WTC11 (cell line): ENCODE measurements at regions of chr9 and their contacts with region 1.

Region 1: DNA sequence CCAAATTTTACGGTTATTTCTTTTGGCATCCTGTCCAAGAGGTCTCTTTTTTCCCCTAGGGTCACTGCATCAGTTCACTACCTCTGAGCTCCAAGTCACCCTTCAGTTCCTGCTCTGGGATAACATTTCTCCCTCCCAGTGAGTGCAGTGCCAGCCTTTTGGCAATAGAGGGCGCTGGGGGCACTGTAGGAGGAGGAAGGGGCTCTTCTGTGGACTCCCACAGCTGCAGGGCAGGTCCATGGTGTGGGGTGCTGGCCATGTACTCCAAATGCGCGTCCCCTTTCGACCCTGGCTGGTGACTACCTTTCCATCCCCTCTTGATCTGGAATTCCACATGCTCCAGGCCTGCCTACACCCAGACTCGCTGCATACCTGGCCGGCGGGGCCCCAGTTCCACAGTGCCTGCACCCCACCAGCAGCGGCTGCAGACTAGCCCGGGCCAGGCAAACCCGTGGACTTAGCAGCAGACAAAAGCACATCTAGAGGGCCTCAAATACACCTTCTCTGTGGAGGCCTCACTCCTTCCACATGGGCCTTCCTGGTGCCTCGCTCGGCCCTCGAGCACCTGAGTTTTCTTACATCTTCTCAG is 20.4 kb upstream of the NINJ1 start:
- DNase-seq: peak; percentile 91
- ATAC-seq: peak; percentile 93
- H3K4me3 Mint-ChIP-seq: no peak overlapping the region
- H3K27ac Mint-ChIP-seq: no peak overlapping the region
- H3K4me1 Mint-ChIP-seq: no peaks in the 10 kb centered on the region
- H3K27me3 Mint-ChIP-seq: peaks cover 2% of the 10 kb centered on the region; the same call in 1 of the 2 replicates
- CTCF ChIP-seq: peak; percentile 92

Region 2: GRCh38 chr9:93108291-93109041 is 45.9 kb before region 1 on chr9:
- CTCF ChIA-PET with region 1: interaction called, 15 read pairs
- POLR2A ChIA-PET with region 1: no interaction called
- DNase-seq: no peak
- ATAC-seq: 0 out of 2 replicates have a peak, but pooled peaks have one; percentile 10
- H3K4me3 Mint-ChIP-seq: no peak overlapping the region
- H3K27ac Mint-ChIP-seq: no peak overlapping the region
- H3K4me1 Mint-ChIP-seq: peaks cover 7% of the 10 kb centered on the region; the same call in 1 of the 2 replicates
- H3K27me3 Mint-ChIP-seq: no peaks in the 10 kb centered on the region
- CTCF ChIP-seq: no peak

Region 3: DNA sequence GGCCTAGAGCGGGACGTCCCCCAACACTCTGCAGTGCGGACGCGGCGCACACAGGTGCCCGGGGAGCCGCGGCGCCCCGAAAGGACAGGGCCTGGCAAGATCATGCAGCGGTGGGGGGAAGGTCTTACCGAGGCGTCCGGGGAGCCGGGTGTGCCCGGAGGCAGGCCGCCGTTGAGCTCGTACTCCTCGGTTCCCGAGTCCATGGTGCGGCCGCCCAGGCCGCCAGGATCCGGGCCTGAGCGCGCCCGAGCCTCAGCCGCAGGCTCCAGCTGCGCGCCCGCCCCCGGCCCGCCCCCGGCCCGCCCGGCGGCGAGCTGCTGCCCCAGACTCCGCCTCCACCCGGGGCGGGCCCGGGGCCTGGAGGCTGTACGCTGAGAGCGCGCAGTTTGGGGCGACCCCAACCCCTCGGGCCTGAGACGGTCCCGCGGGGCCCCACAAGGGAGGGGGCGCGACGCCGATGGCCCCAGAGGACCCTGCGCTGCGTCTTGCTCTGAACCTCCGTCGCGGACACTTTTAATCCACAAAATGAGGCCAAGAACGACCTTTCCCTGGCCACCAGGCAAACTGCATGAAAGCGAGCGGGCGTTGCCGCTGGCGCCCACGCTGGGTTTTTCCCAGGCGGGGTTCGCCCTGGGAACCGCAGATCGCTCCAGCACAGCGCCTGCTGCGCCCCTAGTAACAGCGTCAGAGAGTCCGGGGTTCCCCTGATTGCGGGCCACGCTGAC is 20.2 kb before region 1 on chr9 and contains the start of gene NINJ1:
- CTCF ChIA-PET with region 1: interaction called, 67 read pairs
- POLR2A ChIA-PET with region 1: interaction called, 4 read pairs
- DNase-seq: peak; percentile 62
- ATAC-seq: peak; percentile 87
- H3K4me3 Mint-ChIP-seq: peak within 1 kb of the TSS; percentile 79
- H3K27ac Mint-ChIP-seq: no peak within 1 kb of the TSS
- H3K4me1 Mint-ChIP-seq: peaks cover 30% of the 10 kb centered on the region
- H3K27me3 Mint-ChIP-seq: peaks cover 20% of the 10 kb centered on the region
- CTCF ChIP-seq: no peak
- total RNA-seq, gene NINJ1: 35.6 to 41.3 TPM (median 37.7 TPM) in 3 replicates

Region 4: DNA sequence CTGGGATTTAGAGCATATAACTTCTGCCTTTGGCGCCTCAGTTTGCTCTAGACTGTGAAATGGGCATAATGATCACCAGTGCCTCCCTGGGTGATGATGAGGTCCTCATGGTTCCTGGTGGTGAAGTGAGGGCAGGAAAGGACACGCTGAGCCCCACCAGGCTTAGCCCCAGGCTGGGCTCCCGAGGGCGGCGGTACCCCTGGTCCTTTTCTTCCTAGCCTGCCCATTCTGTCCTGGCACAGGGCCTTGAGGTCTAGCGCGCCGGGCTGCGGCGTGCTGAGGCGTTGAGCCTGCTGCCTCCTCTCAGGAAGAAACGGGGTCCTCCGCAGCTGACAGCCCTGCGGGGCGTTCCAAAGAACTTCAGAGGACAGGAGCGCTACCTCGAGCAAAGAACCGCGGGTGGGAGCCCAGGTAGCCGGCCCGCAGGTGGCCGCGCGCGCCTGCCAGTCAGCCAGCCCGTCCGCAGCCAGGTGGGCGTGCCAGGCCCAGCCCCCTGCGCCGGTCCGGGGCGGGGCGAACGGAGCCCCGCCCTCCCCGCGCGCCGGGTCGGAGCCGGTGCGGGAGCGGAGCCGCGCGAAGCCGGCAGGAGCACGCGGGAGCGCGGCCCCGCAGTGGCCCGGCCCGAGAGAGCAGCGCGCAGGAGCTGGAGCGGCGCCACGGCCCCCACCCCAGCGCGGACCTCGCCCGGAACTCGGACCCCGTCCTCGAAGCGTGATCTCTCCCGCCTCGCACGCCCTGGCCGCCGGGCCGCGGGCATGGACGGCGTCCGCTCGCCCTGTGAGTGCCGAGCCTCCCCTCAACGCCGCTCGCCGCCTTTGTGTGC is 29.4 kb after region 1 on chr9 and contains the start of gene WNK2:
- CTCF ChIA-PET with region 1: interaction called, 15 read pairs
- POLR2A ChIA-PET with region 1: no interaction called
- DNase-seq: peak; percentile 55
- ATAC-seq: peak; percentile 67
- H3K4me3 Mint-ChIP-seq: peak within 1 kb of the TSS; percentile 71
- H3K27ac Mint-ChIP-seq: no peak within 1 kb of the TSS
- H3K4me1 Mint-ChIP-seq: peaks cover 29% of the 10 kb centered on the region
- H3K27me3 Mint-ChIP-seq: peaks cover 31% of the 10 kb centered on the region
- CTCF ChIP-seq: no peak
- total RNA-seq, gene WNK2: 113 to 121 TPM (median 120 TPM) in 3 replicates

Region 5: DNA sequence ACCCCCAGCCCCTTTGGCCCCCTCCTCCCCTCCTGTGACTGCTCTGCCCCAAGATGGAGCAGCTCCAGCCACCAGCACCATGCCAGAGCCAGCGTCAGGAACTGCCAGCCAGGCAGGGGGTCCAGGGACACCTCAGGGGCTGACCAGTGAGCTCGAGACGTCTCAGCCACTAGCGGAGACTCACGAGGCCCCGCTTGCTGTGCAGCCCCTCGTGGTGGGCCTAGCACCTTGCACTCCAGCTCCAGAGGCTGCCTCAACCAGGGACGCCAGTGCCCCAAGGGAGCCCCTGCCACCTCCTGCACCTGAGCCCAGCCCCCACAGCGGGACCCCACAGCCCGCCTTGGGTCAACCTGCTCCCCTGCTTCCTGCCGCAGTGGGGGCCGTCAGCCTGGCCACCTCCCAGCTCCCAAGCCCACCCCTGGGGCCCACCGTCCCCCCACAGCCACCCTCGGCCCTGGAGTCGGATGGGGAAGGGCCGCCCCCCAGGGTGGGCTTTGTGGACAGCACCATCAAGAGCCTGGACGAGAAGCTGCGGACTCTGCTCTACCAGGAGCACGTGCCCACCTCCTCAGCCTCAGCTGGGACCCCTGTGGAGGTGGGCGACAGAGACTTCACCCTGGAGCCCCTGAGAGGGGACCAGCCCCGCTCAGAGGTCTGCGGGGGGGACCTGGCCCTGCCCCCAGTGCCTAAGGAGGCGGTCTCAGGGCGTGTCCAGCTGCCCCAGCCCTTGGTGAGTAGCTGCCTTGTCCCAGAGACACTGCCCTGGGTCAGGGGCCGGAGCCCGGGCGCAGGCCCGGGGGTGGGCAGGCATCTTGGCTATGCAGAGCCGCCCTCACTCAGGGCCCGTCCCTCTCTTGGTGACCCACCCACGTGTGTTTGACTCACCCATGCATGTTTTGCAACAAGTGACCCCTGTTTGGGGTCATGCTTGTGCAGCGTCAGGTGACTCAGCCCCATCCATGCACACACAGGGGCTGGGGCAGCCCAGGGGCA is 134.8 kb after region 1 on chr9:
- CTCF ChIA-PET with region 1: interaction called, 19 read pairs
- POLR2A ChIA-PET with region 1: no interaction called
- DNase-seq: no peak
- ATAC-seq: peak; percentile 34
- H3K4me3 Mint-ChIP-seq: no peak overlapping the region
- H3K27ac Mint-ChIP-seq: no peak overlapping the region
- H3K4me1 Mint-ChIP-seq: peaks cover 9% of the 10 kb centered on the region; the same call in 1 of the 2 replicates
- H3K27me3 Mint-ChIP-seq: no peaks in the 10 kb centered on the region; the same call in 1 of the 2 replicates
- CTCF ChIP-seq: no peak